ENCODE measurements at regions of chr1 and their contacts with region 1.

Region 1: GRCh38 chr1:45353685-45354084 is 13.4 kb upstream of the MUTYH start:
- DNase-seq: no peak
- ATAC-seq: no peak
- H3K4me3 ChIP-seq: no peak overlapping the region
- H3K4me1 ChIP-seq: no peaks in the 10 kb centered on the region
- CTCF ChIP-seq: no peak

Region 2: DNA sequence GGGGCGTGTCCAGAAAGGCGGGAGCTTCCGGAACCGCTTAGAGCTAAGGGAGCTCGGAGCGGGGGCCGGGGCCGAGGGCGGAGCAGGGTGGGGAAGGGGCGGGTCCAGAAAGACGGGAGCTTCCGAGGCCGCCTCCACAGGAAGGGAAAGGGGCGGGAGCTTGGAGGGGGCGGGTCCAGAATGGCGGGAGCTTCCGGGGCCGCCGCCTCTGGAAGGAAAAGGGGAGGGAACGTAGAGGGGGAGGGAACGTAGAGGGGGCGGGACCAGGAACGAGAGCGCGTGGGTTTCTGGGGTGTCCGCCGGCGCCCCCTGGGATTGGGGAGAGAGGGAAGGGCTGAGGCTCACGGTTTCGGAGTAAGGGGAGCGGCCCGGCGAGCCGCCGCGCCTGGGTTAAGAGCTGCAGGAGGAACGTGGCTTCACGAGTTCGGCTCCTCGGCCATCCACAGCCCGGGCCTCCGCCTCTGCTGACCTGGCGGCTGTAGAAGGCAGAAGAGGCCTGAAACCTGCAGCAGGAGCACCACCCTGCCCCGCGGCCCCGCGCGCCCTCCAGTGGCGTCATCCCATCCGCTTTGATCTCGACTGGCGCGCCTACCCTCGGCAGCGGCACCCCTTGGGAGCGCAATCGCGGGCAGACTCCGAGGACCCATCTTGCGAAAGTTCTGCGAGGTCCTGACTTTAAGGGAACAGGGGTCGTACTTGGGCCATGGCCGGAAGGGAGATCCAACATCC is 49.9 kb before region 1 on chr1:
- intact Hi-C with region 1: no loop called
- DNase-seq: peak; percentile 99 to 100 (median 99)
- ATAC-seq: peak; percentile 96
- H3K4me3 ChIP-seq: peak overlapping the region; percentile 49
- H3K4me1 ChIP-seq: peaks cover 11% of the 10 kb centered on the region
- CTCF ChIP-seq: peak; percentile 61

Region 3: DNA sequence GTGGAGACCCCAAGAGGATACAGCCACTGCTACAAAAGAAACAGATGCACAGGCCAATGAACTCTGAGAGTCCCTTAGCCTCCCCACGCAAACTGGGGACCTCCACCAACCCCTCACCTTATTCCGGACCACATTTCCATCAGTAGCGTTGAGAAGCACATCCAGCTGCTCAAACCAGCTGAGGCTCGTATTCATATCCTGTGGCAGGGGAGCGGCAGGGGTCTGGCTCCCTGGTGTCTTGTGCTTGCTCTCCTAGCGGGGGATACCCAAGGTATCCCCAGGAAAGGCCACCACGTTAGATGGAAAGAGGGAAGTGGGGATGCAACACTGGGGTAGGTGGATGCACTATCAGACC is 145.7 kb after region 1 on chr1:
- intact Hi-C with region 1: loop called in 1 of 2 experiments (anchors 5 kb)
- DNase-seq: no peak
- ATAC-seq: peak; percentile 2
- H3K4me3 ChIP-seq: peak overlapping the region; percentile 37
- H3K4me1 ChIP-seq: peaks cover 13% of the 10 kb centered on the region
- CTCF ChIP-seq: no peak

Measured in mucosa of descending colon (tissue), 3 donors.